ENCODE measurements at regions of chr10 and their contacts with region 1.

Region 1: GRCh38 chr10:117216611-117217195 is 19.4 kb downstream of the KCNK18 start:
- DNase-seq: peak; percentile 72
- ATAC-seq: peak; percentile 91
- H3K4me3 Mint-ChIP-seq: peak overlapping the region; percentile 70
- H3K27ac Mint-ChIP-seq: no peak overlapping the region
- H3K4me1 Mint-ChIP-seq: peaks cover 7% of the 10 kb centered on the region
- H3K27me3 Mint-ChIP-seq: peaks cover 30% of the 10 kb centered on the region
- CTCF ChIP-seq: peak; percentile 99

Region 2: DNA sequence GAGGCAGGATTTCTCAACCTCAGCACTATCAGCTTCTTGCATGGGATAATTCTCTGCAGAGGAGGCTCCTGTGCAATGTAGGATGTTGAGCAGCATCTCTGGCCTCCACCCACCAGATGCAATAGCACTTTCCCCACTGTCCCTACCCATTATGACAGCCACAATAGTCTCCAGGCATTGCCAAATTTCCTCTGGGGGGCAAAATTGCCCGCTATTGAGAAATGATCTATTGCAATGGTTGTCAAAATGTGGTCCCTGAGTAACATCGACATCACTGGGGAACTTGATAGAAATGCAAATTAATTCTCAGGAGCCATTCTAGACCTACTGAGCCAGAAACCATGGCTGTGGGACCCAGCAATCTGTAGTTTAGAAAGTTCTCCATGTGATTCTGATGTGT is 12.4 kb before region 1 on chr10:
- CTCF ChIA-PET with region 1: interaction called, 29 read pairs
- POLR2A ChIA-PET with region 1: no interaction called
- intact Hi-C with region 1: no loop called
- DNase-seq: no peak
- ATAC-seq: no peak
- H3K4me3 Mint-ChIP-seq: no peak overlapping the region
- H3K27ac Mint-ChIP-seq: no peak overlapping the region
- H3K4me1 Mint-ChIP-seq: no peaks in the 10 kb centered on the region
- H3K27me3 Mint-ChIP-seq: peaks cover 15% of the 10 kb centered on the region
- CTCF ChIP-seq: no peak

Region 3: DNA sequence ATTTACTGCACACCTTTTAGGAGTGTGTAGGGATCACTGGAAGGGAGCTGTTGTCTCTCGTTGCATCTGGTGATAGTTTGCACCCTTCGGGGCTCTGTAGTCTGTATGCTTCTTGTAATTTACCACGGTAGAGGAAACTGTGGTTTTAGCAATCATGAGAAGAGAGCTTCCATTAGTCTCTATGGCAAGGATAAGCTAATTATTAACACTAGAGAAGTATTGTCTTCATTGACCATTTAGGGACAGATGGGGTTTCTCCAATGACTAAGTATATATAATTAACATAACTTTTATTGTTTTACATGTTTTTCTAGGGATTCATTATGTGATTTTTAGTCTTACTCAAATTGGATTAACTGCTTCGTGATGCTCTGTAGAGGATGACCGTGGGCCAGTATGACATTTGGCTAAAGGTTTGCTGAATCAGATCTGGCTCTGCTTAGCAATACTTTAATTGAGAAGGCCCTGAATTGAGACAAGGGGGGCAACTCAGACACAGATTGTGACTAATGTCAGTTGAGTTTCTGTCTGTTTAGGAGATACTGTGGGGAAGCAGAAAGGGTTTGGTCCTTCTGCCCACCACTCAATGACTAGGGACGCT is 32.9 kb after region 1 on chr10:
- CTCF ChIA-PET with region 1: interaction called, 22 read pairs
- POLR2A ChIA-PET with region 1: no interaction called
- intact Hi-C with region 1: no loop called
- DNase-seq: no peak
- ATAC-seq: peak; percentile 24
- H3K4me3 Mint-ChIP-seq: no peak overlapping the region
- H3K27ac Mint-ChIP-seq: no peak overlapping the region
- H3K4me1 Mint-ChIP-seq: peaks cover 10% of the 10 kb centered on the region
- H3K27me3 Mint-ChIP-seq: peaks cover 24% of the 10 kb centered on the region
- CTCF ChIP-seq: no peak

Region 4: DNA sequence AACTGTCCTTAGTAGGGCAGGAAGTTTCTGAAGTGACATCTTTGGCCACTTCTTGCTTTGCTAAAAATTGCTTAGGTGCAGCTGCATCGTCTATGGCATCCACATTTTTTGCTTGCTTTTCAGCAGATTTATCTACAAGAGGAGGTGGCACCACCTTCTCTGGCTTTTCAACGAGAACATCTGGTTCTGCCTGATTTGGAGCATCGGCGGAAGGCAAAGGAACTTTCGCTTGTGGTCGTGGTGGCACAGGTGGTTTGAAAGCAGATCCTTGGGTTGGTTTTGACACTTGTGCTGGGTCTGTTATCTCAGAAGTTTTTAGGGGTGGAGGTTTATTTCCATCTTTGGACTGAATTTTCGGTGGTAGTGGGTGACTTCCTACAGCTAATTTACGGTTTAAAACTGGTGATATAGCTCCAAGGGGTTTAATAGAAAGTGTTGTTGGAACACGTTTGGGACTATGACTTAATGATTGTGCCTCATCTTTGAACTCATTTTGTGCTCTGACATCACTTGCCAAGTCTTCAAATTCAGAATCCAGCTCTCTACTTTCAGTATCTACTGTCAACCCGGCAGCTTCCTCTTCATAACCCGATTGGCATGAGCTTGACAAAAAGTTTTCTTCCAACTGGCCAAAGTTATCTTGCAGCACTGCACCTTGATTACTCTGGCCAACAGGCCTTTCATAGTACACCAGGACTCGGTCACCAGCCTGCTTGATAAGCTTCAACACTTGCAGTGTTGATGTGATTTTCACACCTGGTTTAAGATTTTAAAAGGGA is 68.2 kb after region 1 on chr10:
- CTCF ChIA-PET with region 1: interaction called, 20 read pairs
- POLR2A ChIA-PET with region 1: no interaction called
- intact Hi-C with region 1: no loop called
- DNase-seq: no peak
- ATAC-seq: no peak
- H3K4me3 Mint-ChIP-seq: no peak overlapping the region
- H3K27ac Mint-ChIP-seq: no peak overlapping the region
- H3K4me1 Mint-ChIP-seq: peaks cover 3% of the 10 kb centered on the region
- H3K27me3 Mint-ChIP-seq: no peaks in the 10 kb centered on the region
- CTCF ChIP-seq: no peak

Region 5: GRCh38 chr10:117327262-117327661 is 110.6 kb after region 1 on chr10:
- CTCF ChIA-PET with region 1: interaction called, 33 read pairs
- POLR2A ChIA-PET with region 1: no interaction called
- intact Hi-C with region 1: loop called (anchors 5 kb)
- DNase-seq: no peak
- ATAC-seq: no peak
- H3K4me3 Mint-ChIP-seq: no peak overlapping the region
- H3K27ac Mint-ChIP-seq: no peak overlapping the region
- H3K4me1 Mint-ChIP-seq: peaks cover 10% of the 10 kb centered on the region
- H3K27me3 Mint-ChIP-seq: no peaks in the 10 kb centered on the region
- CTCF ChIP-seq: no peak

Region 6: GRCh38 chr10:117442944-117443685 is 226.4 kb after region 1 on chr10:
- CTCF ChIA-PET with region 1: interaction called, 11 read pairs
- POLR2A ChIA-PET with region 1: no interaction called
- intact Hi-C with region 1: no loop called
- DNase-seq: peak; percentile 75
- ATAC-seq: peak; percentile 56
- H3K4me3 Mint-ChIP-seq: no peak overlapping the region
- H3K27ac Mint-ChIP-seq: no peak overlapping the region
- H3K4me1 Mint-ChIP-seq: no peaks in the 10 kb centered on the region
- H3K27me3 Mint-ChIP-seq: peaks cover 25% of the 10 kb centered on the region
- CTCF ChIP-seq: peak; percentile 92

Measured in activated CD8-positive, alpha-beta T cell treated with anti-CD3 and anti-CD28 coated beads for 36 hours (primary cell).